ENCODE measurements at regions of chr5 and their contacts with region 1.

Region 1: DNA sequence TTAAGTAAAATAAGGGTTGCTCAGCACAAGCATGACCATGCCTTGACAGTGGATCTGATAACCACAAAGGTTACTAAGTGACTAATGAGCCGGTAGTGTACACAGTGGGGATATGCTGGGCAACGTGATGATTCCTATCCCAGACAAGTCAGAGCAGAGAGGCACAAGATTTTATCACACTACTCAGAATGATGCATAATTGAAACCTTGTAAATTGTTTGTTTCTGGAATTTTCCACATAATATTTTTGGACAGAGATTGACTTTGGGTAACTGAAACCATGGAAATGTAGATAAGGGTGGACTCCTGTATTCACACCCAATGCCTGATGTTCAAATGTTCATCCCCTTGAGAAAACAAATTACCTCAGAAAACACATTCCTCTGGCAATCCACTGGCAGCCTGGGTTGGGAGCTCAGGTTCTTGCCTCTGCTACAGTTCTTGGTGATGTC is 16.2 kb upstream of the ERAP1 start:
- DNase-seq: peak; percentile 99
- H3K4me3 ChIP-seq: no peak overlapping the region
- H3K27ac ChIP-seq: peak overlapping the region; percentile 89
- H3K4me1 ChIP-seq: peaks cover 32% of the 10 kb centered on the region
- H3K27me3 ChIP-seq: no peaks in the 10 kb centered on the region
- CTCF ChIP-seq: no peak

Region 2: GRCh38 chr5:96781031-96781937 is 42.6 kb before region 1 on chr5:
- CTCF ChIA-PET with region 1: no interaction called
- dilution Hi-C with region 1: no loop called
- in situ Hi-C with region 1: no loop called
- intact Hi-C with region 1: loop called (anchors 2 kb)
- DNase-seq: peak; percentile 74
- H3K4me3 ChIP-seq: no peak overlapping the region
- H3K27ac ChIP-seq: peak overlapping the region; percentile 59
- H3K4me1 ChIP-seq: peaks cover 21% of the 10 kb centered on the region
- H3K27me3 ChIP-seq: no peaks in the 10 kb centered on the region
- CTCF ChIP-seq: no peak

Region 3: GRCh38 chr5:96794757-96795156 is 29.2 kb before region 1 on chr5:
- CTCF ChIA-PET with region 1: no interaction called
- dilution Hi-C with region 1: no loop called
- in situ Hi-C with region 1: no loop called
- intact Hi-C with region 1: no loop called
- DNase-seq: no peak
- H3K4me3 ChIP-seq: no peak overlapping the region
- H3K27ac ChIP-seq: no peak overlapping the region
- H3K4me1 ChIP-seq: peaks cover 10% of the 10 kb centered on the region
- H3K27me3 ChIP-seq: no peaks in the 10 kb centered on the region
- CTCF ChIP-seq: no peak

Region 4: DNA sequence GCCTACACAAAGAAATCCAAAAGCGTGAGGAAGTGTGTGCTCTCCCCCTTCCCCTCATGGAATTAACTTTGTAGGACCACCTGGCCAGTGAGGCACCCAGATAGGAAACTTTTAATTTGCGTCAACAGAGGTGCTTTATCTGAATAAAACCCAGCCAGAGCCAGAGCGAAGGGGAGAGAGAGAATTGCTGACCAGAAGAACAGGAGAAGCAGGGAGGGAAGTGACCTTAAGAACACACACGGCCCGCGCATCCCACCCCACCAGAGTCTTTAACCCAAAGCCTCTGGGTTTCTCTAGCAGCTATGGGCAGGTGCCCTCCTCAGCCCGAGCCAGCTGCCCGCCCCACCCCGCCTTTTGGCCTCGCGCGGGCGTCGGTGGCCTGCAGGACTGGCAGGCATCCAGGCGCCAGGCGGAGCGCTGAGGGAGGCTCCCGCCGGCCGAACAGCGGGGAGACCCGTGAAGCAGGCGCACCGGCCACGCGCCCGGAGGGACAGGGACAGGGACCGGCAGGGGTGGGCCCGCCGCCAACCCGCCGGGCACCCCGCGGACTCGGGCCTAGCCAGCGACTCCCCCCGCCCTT is 16.8 kb before region 1 on chr5:
- CTCF ChIA-PET with region 1: no interaction called
- dilution Hi-C with region 1: no loop called
- in situ Hi-C with region 1: no loop called
- intact Hi-C with region 1: loop called (anchors 1 kb)
- DNase-seq: peak; percentile 67
- H3K4me3 ChIP-seq: peak overlapping the region; percentile 72 to 92 (median 78)
- H3K27ac ChIP-seq: peak overlapping the region; percentile 91
- H3K4me1 ChIP-seq: peaks cover 23% of the 10 kb centered on the region
- H3K27me3 ChIP-seq: no peaks in the 10 kb centered on the region
- CTCF ChIP-seq: no peak

Region 5: DNA sequence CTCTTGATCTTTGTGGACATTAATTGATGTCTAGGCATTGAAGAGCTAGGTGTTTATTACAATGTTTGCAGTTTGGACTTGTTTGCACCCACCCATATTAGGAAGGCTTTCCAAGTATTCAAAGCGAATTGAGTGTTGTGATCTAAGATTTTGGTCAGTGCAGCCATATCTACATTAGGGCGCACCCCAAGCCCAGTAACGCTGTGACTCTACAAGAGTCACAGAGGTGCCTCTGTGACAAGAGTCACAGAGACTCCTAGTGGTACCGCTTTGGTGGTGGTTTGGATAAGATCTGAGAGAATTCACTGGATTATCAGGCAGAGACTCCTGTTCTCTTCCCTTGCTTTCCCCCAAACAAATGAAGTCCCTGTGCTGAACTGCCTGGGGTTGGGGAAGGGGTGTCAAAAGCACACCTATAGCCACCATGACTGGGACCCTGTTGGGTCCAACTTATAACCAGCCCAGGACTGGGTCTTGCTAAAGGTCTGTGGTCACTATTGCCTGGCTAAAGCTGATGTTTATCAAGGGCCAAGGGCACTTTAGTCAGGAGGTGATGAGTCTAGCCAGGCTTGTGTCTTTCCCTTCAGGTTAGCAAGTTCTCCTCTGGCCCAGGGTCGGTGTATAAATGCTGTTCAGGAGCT is 473.3 kb after region 1 on chr5:
- CTCF ChIA-PET with region 1: no interaction called
- dilution Hi-C with region 1: no loop called
- in situ Hi-C with region 1: no loop called
- intact Hi-C with region 1: no loop called
- DNase-seq: peak; percentile 6
- H3K4me3 ChIP-seq: no peak overlapping the region
- H3K27ac ChIP-seq: no peak overlapping the region
- H3K4me1 ChIP-seq: no peaks in the 10 kb centered on the region
- H3K27me3 ChIP-seq: no peaks in the 10 kb centered on the region
- CTCF ChIP-seq: peak; percentile 27 to 45

Measured in mammary epithelial cell (primary cell).